Posterior cingulate gyrus (tissue), 11 donors: ENCODE measurements at regions of chr2 and their contacts with region 1.

Region 1: GRCh38 chr2:152335010-152335725 is at the start of gene FMNL2:
- DNase-seq: peak; percentile 84 to 98 (median 89)

Region 2: GRCh38 chr2:151999053-151999452 is 336.1 kb before region 1 on chr2:
- intact Hi-C with region 1: no loop called
- DNase-seq: peak in 4 of 10 donors; percentile 23 to 82 (median 46)

Region 3: DNA sequence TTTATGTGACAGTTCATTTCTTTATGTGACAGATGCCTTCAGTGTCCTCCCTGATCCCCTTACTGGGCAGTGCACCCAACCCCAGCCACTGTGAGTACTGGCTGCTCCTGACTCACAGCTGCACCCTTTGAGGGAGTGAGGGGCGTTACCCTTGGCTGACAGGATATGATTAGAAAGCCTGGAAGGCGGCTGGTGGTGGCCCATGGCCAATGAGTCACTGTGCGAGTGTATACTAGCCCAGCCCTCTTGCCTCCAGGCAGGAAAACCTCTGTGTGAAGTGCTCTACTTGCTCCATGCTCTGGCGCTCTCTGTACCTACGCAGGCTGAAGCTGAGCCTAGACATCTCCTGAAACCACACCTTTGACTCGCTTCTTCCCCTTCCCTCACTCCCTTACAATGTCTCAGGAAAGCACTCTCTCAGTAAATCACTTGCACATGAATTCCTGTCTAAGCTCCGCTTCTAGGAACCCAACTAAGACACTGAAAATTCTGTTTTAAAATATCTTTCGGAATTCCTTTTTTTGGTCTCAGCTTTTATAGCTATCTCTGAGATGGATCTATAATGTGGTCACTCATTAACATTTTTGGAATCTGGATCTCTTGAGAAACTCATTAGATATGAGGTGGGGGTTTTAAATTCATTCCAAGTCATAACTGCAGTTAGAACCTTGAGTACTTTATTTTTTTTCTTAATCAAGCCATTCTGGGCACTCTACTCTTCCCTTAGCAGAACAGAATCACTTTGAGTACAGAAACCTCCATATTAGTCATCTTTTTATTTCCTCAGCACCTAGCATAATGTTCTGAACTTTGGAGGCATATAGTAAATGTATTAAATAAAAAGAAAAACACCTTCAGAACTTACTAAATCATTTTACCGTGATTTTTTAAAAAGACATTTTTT is 134.4 kb before region 1 on chr2:
- intact Hi-C with region 1: loop called (anchors 10 kb)
- DNase-seq: peak in 6 of 10 donors; percentile 25 to 84 (median 62)

Region 4: DNA sequence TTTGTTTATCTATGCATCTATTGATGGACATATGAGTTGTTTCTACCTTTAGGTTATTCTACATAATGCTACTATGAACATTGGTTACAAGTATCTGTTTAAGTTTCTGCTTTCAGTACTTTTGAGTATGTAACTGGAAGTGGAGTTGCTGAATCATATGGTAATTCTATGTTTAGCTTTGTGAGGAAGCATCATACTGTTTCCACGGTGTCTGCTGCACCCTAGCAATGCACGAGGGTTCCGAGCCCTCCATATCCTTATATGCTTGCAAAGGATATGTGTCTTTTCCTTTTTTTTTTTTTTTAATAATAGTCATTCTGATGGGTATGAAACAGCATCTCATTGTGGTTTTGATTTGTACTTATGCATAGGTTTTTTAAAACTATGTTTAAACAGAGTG is 83.5 kb after region 1 on chr2:
- intact Hi-C with region 1: loop called (anchors 5 kb)
- DNase-seq: peak in 4 of 10 donors; percentile 43 to 92 (median 62)

Region 5: GRCh38 chr2:152453129-152453911 is 118.2 kb after region 1 on chr2:
- intact Hi-C with region 1: loop called (anchors 5 kb)
- DNase-seq: peak in 3 of 10 donors; percentile 50 to 90 (median 53)

Region 6: GRCh38 chr2:152466980-152467676 is 132.0 kb after region 1 on chr2:
- intact Hi-C with region 1: loop called (anchors 5 kb)
- DNase-seq: no peak

Region 7: GRCh38 chr2:152566728-152567069 is 231.5 kb after region 1 on chr2:
- intact Hi-C with region 1: loop called (anchors 10 kb)
- DNase-seq: no peak

Region 8: GRCh38 chr2:152627351-152627957 is 292.3 kb after region 1 on chr2:
- intact Hi-C with region 1: loop called (anchors 5 kb)
- DNase-seq: no peak